ENCODE measurements at regions of chr1 and their contacts with region 1.

Region 1: DNA sequence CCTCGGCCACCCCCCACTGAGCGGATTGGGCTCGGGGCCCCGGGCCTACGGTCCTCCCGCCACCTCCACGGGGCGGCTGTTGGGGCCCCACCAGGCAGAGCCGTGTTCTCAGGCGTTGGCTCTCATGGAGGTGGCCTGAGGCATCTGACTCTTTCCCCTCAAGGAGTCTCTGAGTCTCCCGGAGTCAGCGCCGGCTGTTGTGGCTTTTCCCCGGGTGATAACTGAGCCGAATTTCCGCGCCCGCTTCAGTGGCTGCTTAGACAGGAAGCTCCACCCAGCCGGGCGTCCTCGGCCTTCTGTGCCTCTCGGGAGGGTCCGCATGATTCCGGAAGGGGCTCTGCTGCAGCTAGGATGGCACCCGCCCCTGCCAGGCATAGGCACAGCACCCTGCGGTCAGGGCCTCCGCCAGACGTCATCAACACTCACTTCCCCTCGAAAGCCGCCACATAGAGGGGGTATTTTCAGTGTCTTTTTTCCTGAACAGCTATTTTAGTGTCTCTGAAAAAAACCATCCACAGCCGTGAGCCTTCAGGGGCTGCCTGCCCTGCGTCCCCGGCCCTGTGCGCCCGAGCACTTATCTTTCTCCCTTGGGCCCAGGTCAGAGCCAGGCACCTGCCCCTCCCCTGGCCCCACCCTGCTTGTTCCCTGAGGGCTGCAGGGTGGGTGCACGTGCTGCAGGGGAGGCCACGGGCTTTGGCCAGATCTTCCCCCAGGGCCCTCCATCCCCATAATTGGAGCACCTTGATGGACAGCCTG is 72.9 kb downstream of the SKI start:
- DNase-seq: peak; percentile 95
- ATAC-seq: peak; percentile 81
- H3K4me3 Mint-ChIP-seq: peak overlapping the region; percentile 79
- H3K27ac Mint-ChIP-seq: peak overlapping the region; percentile 95
- H3K4me1 Mint-ChIP-seq: peaks cover 59% of the 10 kb centered on the region
- H3K27me3 Mint-ChIP-seq: no peaks in the 10 kb centered on the region

Region 2: GRCh38 chr1:2163205-2163604 is 137.8 kb before region 1 on chr1:
- CTCF ChIA-PET with region 1: no interaction called
- POLR2A ChIA-PET with region 1: interaction called, 10 read pairs
- intact Hi-C with region 1: no loop called
- DNase-seq: peak; percentile 28
- ATAC-seq: no peak
- H3K4me3 Mint-ChIP-seq: no peak overlapping the region
- H3K27ac Mint-ChIP-seq: no peak overlapping the region
- H3K4me1 Mint-ChIP-seq: peaks cover 6% of the 10 kb centered on the region
- H3K27me3 Mint-ChIP-seq: no peaks in the 10 kb centered on the region

Region 3: GRCh38 chr1:2212542-2213491 is 88.2 kb before region 1 on chr1:
- CTCF ChIA-PET with region 1: no interaction called
- POLR2A ChIA-PET with region 1: no interaction called
- intact Hi-C with region 1: no loop called
- DNase-seq: peak; percentile 73
- ATAC-seq: peak; percentile 73
- H3K4me3 Mint-ChIP-seq: no peak overlapping the region
- H3K27ac Mint-ChIP-seq: no peak overlapping the region
- H3K4me1 Mint-ChIP-seq: peaks cover 2% of the 10 kb centered on the region
- H3K27me3 Mint-ChIP-seq: no peaks in the 10 kb centered on the region

Region 4: GRCh38 chr1:2227346-2228153 is 73.5 kb before region 1 on chr1:
- CTCF ChIA-PET with region 1: interaction called, 3 read pairs
- POLR2A ChIA-PET with region 1: interaction called, 5 read pairs
- intact Hi-C with region 1: loop called (anchors 1 to 2 kb)
- DNase-seq: peak; percentile 98
- ATAC-seq: peak; percentile 94
- H3K4me3 Mint-ChIP-seq: peak overlapping the region; percentile 32
- H3K27ac Mint-ChIP-seq: no peak overlapping the region
- H3K4me1 Mint-ChIP-seq: peaks cover 6% of the 10 kb centered on the region
- H3K27me3 Mint-ChIP-seq: no peaks in the 10 kb centered on the region

Region 5: DNA sequence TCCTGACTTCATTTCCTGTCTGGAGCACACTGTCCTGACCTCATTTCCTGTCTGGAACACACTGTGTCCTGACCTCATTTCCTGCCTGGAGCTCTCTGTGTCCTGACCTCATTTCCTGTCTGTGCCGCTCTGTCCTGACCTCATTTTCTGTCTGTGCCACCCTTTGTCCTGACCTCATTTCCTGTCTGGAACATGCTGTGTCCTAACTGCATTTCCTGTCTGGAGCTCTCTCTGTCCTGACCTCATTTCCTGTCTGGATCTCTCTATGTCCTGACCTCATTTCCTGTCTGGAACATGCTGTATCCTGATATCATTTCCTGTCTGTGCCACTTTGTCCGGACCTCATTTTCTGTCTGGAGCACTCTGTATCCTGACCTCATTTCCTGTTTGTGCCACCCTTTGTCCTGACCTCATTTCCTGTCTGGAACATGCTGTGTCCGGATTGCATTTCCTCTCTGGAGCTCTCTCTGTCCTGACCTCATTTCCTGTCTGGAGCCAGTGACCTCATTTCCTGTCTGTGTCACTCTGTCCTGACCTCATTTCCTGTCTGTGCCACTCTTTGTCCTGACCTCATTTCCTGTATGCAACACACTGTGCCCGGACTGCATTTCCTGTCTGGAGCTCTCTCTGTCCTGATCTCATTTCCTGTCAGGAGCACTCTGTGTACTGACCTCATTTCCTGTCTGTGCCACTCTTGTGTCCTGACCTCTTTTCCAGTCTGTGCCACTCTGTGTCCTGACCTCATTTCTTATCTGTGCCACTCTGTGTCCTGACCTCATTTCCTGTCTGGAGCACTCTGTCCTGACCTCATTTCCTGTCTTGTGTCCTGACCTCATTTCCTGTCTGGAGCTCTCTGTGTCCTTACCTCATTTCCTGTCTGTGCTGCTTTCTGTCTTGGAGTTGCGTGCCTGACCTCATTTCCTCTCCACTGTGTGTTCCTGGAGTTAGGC is 45.3 kb before region 1 on chr1:
- CTCF ChIA-PET with region 1: interaction called, 3 read pairs
- POLR2A ChIA-PET with region 1: interaction called, 8 read pairs
- intact Hi-C with region 1: loop called (anchors 1 kb)
- DNase-seq: peak; percentile 87
- ATAC-seq: peak; percentile 71
- H3K4me3 Mint-ChIP-seq: no peak overlapping the region
- H3K27ac Mint-ChIP-seq: no peak overlapping the region
- H3K4me1 Mint-ChIP-seq: peaks cover 54% of the 10 kb centered on the region
- H3K27me3 Mint-ChIP-seq: no peaks in the 10 kb centered on the region

Region 6: GRCh38 chr1:2275796-2276536 is 25.1 kb before region 1 on chr1:
- CTCF ChIA-PET with region 1: no interaction called
- POLR2A ChIA-PET with region 1: no interaction called
- intact Hi-C with region 1: no loop called
- DNase-seq: no peak
- ATAC-seq: peak; percentile 27
- H3K4me3 Mint-ChIP-seq: no peak overlapping the region
- H3K27ac Mint-ChIP-seq: peak overlapping the region; percentile 80
- H3K4me1 Mint-ChIP-seq: peaks cover 56% of the 10 kb centered on the region
- H3K27me3 Mint-ChIP-seq: no peaks in the 10 kb centered on the region

Region 7: DNA sequence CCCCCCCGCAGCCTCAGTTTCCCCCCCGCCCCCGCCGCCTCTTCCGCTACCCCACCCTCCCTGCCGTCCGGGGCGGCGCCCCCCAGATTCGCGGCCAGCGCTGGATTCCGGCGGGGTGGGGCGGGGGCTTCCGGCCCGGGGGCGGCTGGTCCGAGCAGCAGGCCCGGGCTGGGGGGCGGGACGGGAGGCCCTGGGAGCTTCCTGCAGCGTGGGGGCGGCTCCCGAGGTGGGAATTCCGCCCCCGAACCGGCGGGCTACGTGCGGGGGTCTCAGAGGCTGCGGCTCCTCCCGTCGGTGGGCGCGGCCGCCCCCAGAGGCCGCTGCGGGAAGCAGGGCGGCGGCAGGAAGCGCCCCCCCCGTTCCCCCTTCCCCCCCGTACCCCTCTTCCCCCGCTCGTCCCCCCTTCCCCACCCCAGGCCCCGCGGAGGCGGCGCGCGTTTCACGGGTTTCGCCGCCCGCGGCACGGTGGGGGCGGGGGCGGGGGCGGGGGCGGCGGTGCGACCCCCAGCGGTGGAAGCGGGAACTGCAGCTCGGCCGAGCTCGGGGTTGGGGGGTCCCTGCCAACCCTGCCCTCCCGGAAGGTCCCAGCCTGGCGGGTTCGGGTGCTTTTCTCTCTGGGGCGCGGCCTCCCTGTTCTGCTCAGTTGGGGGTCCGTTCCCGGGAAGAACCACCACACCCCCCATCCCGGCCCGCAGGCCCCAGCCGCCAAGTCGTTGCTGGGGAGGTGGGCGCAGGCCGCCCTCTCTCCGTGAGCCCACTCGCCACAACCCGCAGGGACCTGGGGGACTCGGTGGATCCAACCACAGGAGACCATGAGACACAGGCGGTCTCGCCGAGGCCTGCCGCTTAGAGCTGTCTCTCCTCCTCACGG is 14.0 kb after region 1 on chr1:
- CTCF ChIA-PET with region 1: interaction called, 6 read pairs
- POLR2A ChIA-PET with region 1: interaction called, 4 read pairs
- intact Hi-C with region 1: loop called (anchors 1 to 2 kb)
- DNase-seq: peak; percentile 71
- ATAC-seq: peak; percentile 20
- H3K4me3 Mint-ChIP-seq: peak overlapping the region; percentile 21
- H3K27ac Mint-ChIP-seq: peak overlapping the region; percentile 58
- H3K4me1 Mint-ChIP-seq: peaks cover 9% of the 10 kb centered on the region
- H3K27me3 Mint-ChIP-seq: no peaks in the 10 kb centered on the region